Caco-2 (cell line): ENCODE measurements at regions of chr10 and their contacts with region 1.

Region 1: DNA sequence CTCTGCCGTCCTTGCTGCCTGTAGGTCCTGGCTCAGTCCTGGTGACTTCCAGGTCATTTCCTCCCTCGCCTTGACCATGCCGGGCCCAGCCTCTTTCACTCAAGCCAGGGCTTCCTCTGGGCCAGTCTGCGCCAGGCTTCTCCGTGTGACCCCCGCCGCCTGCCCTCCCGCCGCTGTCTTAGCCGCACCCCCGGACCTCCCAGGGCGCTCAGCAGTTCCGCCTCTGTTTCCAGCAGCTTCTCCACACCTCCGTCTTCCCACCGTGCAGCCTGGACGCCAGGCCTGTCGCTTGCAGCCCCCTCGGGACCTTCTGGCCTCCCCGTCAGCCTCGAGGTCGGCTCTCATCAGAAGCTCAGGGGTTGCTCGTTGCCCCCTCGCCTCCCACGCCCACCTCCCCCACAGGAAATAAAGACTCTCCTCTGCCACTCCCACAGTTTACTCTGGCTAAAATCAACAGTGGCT is 123.0 kb upstream of the FZD8 start:
- DNase-seq: peak; percentile 66 to 78
- H3K4me3 ChIP-seq: peak overlapping the region; percentile 44
- H3K4me3 Mint-ChIP-seq: peak overlapping the region; percentile 90
- H3K27ac Mint-ChIP-seq: peak overlapping the region; percentile 94
- H3K4me1 ChIP-seq: peaks cover 44% of the 10 kb centered on the region
- H3K4me1 Mint-ChIP-seq: peaks cover 26% of the 10 kb centered on the region
- H3K27me3 ChIP-seq: no peaks in the 10 kb centered on the region
- H3K27me3 Mint-ChIP-seq: no peaks in the 10 kb centered on the region
- CTCF ChIP-seq: peak in 1 of 2 experiments; percentile 13

Region 2: GRCh38 chr10:35642027-35642792 is 122.9 kb before region 1 on chr10 and contains the start of gene FZD8:
- CTCF ChIA-PET with region 1: no interaction called
- POLR2A ChIA-PET with region 1: interaction called, 3 read pairs
- intact Hi-C with region 1: loop called (anchors 1 kb)
- DNase-seq: peak; percentile 94 to 96
- H3K4me3 ChIP-seq: peak within 1 kb of the TSS; percentile 76
- H3K4me3 Mint-ChIP-seq: peak within 1 kb of the TSS; percentile 89
- H3K27ac Mint-ChIP-seq: no peak within 1 kb of the TSS
- H3K4me1 ChIP-seq: peaks cover 3% of the 10 kb centered on the region; the same call in 1 of the 2 replicates
- H3K4me1 Mint-ChIP-seq: no peaks in the 10 kb centered on the region
- H3K27me3 ChIP-seq: peaks cover 4% of the 10 kb centered on the region
- H3K27me3 Mint-ChIP-seq: peaks cover 17% of the 10 kb centered on the region
- CTCF ChIP-seq: peak in 1 of 2 experiments; percentile 37
- total RNA-seq, gene FZD8: 2.4 and 3.4 TPM in 2 replicates

Region 3: GRCh38 chr10:35723059-35723458 is 42.0 kb before region 1 on chr10:
- CTCF ChIA-PET with region 1: interaction called, 3 read pairs
- POLR2A ChIA-PET with region 1: no interaction called
- intact Hi-C with region 1: loop called (anchors 1 kb)
- DNase-seq: no peak
- H3K4me3 ChIP-seq: no peak overlapping the region
- H3K4me3 Mint-ChIP-seq: no peak overlapping the region
- H3K27ac Mint-ChIP-seq: no peak overlapping the region
- H3K4me1 ChIP-seq: peaks cover 7% of the 10 kb centered on the region; the same call in 1 of the 2 replicates
- H3K4me1 Mint-ChIP-seq: peaks cover 9% of the 10 kb centered on the region
- H3K27me3 ChIP-seq: no peaks in the 10 kb centered on the region
- H3K27me3 Mint-ChIP-seq: peaks cover 9% of the 10 kb centered on the region
- CTCF ChIP-seq: no peak

Region 4: DNA sequence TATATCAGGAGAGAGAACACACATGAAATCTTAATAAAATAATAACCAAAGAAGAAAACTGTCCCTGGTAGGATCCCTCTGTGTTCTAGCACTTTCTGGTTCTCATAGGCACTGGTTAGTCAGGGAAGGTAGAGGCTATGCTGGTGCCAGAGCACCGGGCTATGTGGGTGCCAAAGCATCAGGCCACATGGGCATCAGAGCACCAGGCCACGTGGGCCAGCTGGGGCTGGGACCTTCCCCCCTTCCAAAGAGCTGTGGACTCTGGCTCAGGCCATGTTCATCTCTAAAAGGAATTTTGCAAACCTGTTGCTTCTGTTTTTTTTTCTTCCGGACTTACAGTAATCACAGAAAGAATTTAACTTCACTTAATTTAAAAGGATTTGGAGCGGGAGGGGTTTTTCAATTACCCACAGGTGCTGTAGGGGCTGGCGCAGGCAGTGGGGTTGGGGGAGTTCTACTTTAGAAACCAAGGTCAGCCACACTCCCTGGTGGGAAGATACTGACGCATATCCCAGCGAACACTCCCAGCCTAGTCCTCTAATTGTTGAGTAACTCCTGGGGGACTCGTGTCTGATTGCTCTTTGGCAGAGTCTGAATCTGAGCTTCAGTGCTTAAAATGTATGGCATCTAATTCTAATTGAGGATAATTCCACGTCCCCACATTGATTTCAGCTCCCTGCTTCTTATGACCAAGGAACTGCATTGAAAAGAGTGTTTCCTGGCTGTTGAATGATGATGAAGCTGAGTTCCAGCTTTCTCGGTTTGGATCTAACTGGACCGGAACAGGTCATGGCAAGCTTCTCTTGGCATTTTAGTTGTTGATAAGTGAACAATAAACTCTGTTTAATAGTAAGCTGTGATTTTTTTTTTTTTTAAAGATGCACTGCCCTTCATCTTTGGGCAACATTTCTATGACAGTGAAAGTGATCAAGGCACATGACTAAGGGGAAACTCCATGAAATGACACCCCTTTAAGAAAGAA is 12.3 kb before region 1 on chr10:
- CTCF ChIA-PET with region 1: interaction called, 6 read pairs
- POLR2A ChIA-PET with region 1: no interaction called
- intact Hi-C with region 1: loop called (anchors 1 kb)
- DNase-seq: no peak
- H3K4me3 ChIP-seq: no peak overlapping the region
- H3K4me3 Mint-ChIP-seq: no peak overlapping the region
- H3K27ac Mint-ChIP-seq: no peak overlapping the region
- H3K4me1 ChIP-seq: peaks cover 4% of the 10 kb centered on the region
- H3K4me1 Mint-ChIP-seq: peaks cover 9% of the 10 kb centered on the region
- H3K27me3 ChIP-seq: no peaks in the 10 kb centered on the region
- H3K27me3 Mint-ChIP-seq: no peaks in the 10 kb centered on the region
- CTCF ChIP-seq: no peak